Upper lobe of right lung (tissue), 1 donor: ENCODE measurements at regions of chr9 and their contacts with region 1.

Region 1: DNA sequence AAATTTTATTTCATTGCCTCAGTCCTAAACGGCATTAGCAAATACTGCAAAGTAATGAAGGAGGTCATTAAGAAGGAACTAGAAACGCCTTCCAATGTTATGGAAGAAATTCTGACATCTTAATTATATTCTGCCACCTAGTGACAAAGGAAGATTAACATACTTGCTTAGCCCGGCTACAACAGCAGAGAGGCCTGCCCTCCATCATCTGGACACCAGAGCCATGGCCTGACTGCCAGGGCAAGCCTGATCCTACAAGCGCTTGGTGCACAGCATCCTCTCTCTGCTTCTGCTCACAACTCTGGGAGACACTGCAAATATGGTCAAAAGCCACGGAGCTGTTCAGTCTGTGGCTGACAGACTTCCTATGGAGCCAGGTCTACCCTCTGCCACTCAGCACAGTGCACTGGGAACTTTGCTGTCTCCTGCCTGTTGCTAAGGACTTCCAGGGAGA is 87.3 kb upstream of the SLC44A1 start:
- DNase-seq: peak; percentile 71
- ATAC-seq: peak; percentile 95
- H3K4me3 ChIP-seq: no peak overlapping the region
- H3K27ac ChIP-seq: no peak overlapping the region
- H3K4me1 ChIP-seq: no peaks in the 10 kb centered on the region
- H3K27me3 ChIP-seq: no peaks in the 10 kb centered on the region
- CTCF ChIP-seq: peak; percentile 59

Region 2: GRCh38 chr9:104860263-104860662 is 296.9 kb before region 1 on chr9:
- intact Hi-C with region 1: no loop called
- DNase-seq: no peak
- ATAC-seq: peak; percentile 7
- H3K4me3 ChIP-seq: no peak overlapping the region
- H3K27ac ChIP-seq: no peak overlapping the region
- H3K4me1 ChIP-seq: peaks cover 64% of the 10 kb centered on the region
- H3K27me3 ChIP-seq: no peaks in the 10 kb centered on the region
- CTCF ChIP-seq: no peak

Region 3: DNA sequence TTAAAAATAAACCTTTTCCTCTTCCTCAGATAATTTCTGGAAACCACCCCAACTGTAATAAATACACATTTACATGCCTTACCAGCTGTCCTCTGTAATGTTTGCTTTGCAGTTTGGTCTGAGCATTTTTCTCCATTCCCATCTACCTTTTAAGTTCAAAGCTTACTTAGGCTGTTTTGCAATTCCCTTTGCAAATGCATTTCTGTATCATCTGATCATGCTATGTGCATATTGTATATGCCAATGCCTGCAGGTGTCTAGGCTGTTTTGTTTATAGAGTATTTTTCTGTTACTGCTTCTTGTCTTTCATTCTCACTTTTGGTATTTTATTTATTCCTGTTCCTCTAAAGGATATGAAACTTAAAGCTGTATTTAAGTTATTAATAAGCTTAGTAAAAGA is 173.6 kb after region 1 on chr9:
- intact Hi-C with region 1: no loop called
- DNase-seq: no peak
- ATAC-seq: no peak
- H3K4me3 ChIP-seq: no peak overlapping the region
- H3K27ac ChIP-seq: no peak overlapping the region
- H3K4me1 ChIP-seq: peaks cover 10% of the 10 kb centered on the region
- H3K27me3 ChIP-seq: no peaks in the 10 kb centered on the region
- CTCF ChIP-seq: no peak

Region 4: GRCh38 chr9:105414947-105415661 is 257.9 kb after region 1 on chr9:
- intact Hi-C with region 1: loop called (anchors 10 kb)
- DNase-seq: no peak
- ATAC-seq: peak; percentile 83
- H3K4me3 ChIP-seq: no peak overlapping the region
- H3K27ac ChIP-seq: no peak overlapping the region
- H3K4me1 ChIP-seq: peaks cover 4% of the 10 kb centered on the region
- H3K27me3 ChIP-seq: no peaks in the 10 kb centered on the region
- CTCF ChIP-seq: peak; percentile 90